Panc1 (cell line): ENCODE measurements at regions of chr17 and their contacts with region 1.

Region 1: DNA sequence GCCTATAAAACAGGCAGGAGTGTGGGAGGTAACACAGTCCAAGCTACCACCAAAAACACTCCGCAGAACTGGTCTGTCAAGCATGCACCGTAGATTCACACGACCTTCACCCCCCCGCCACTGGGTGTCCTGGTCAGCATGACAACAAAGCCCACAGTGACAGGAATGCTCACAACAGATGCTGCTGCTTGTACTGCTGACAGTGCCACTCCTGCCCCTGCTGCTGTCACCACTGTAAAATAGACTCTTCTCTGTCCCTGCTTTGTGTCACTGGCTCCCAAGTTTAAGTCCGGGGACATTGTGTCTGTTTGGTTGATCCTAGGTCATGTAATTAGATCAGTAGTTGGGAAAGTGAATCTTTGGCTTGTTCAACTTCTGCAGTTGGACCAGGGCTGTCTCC is 7.0 kb upstream of the ODF4 start:
- DNase-seq: no peak
- ATAC-seq: no peak
- H3K4me3 ChIP-seq: no peak overlapping the region
- H3K27ac ChIP-seq: no peak overlapping the region
- H3K4me1 ChIP-seq: no peaks in the 10 kb centered on the region
- H3K27me3 ChIP-seq: no peaks in the 10 kb centered on the region; the same call in 1 of the 2 replicates
- CTCF ChIP-seq: no peak

Region 2: GRCh38 chr17:8310601-8311123 is 22.0 kb before region 1 on chr17:
- CTCF ChIA-PET with region 1: no interaction called
- POLR2A ChIA-PET with region 1: no interaction called
- in situ Hi-C with region 1: no loop called
- intact Hi-C with region 1: no loop called
- DNase-seq: no peak
- ATAC-seq: no peak
- H3K4me3 ChIP-seq: no peak overlapping the region
- H3K27ac ChIP-seq: no peak overlapping the region
- H3K4me1 ChIP-seq: no peaks in the 10 kb centered on the region
- H3K27me3 ChIP-seq: no peaks in the 10 kb centered on the region
- CTCF ChIP-seq: no peak

Region 3: DNA sequence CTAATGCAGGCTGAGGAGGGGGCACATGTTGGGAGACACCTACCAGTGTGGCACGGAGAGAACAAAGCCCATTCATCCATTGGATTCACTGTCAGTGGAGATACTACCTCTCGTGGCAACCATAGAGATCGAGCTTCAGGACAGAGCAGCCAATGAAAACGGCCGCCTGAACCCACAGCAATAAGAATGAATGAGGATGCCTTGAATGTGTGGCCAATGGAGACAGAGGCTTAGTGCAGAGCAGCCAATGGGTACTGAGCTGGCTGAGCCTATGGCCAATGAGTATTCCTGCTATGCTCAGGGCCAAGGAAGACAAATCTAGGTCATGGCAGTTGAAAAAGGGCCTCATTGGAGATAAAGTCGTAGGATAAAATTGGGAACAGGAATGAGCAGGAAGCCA is 11.7 kb before region 1 on chr17:
- CTCF ChIA-PET with region 1: interaction called, 12 read pairs
- POLR2A ChIA-PET with region 1: interaction called, 3 read pairs
- in situ Hi-C with region 1: no loop called
- intact Hi-C with region 1: no loop called
- DNase-seq: no peak
- ATAC-seq: no peak; the same call in 1 of the 2 replicates
- H3K4me3 ChIP-seq: no peak overlapping the region
- H3K27ac ChIP-seq: no peak overlapping the region
- H3K4me1 ChIP-seq: no peaks in the 10 kb centered on the region
- H3K27me3 ChIP-seq: no peaks in the 10 kb centered on the region
- CTCF ChIP-seq: no peak